ENCODE measurements at regions of chr5 and their contacts with region 1.

Region 1: DNA sequence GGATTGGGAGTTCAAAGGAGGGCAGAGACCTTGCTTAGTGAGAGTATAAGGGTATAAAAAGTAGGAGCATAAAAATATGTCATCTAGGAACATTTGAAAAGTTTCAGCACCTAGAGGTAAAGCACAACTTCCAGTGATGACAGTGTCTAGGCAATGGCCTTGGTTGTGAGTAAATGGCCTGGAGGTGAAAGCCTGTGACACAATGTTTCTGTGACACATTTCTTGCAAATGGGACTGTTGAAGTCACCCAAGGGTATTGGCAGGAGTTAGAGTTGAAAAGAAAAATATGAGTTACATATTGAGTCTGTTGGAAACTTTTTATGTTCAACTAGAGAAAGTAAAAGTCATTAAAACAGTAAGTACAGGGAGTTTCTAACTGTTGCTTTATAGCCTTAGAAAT is 14.8 kb downstream of the C5orf47 start:
- H3K4me3 ChIP-seq: no peak overlapping the region
- H3K27ac ChIP-seq: no peak overlapping the region
- H3K4me1 ChIP-seq: no peaks in the 10 kb centered on the region
- CTCF ChIP-seq: no peak

Region 2: GRCh38 chr5:175640106-175640775 is 1636.4 kb after region 1 on chr5:
- CTCF ChIA-PET with region 1: interaction called, 10 read pairs
- POLR2A ChIA-PET with region 1: no interaction called
- H3K4me3 ChIP-seq: no peak overlapping the region
- H3K27ac ChIP-seq: no peak overlapping the region
- H3K4me1 ChIP-seq: no peaks in the 10 kb centered on the region
- CTCF ChIP-seq: no peak

Measured in HEK293 (cell line).